ENCODE measurements at regions of chr13 and their contacts with region 1.

Region 1: DNA sequence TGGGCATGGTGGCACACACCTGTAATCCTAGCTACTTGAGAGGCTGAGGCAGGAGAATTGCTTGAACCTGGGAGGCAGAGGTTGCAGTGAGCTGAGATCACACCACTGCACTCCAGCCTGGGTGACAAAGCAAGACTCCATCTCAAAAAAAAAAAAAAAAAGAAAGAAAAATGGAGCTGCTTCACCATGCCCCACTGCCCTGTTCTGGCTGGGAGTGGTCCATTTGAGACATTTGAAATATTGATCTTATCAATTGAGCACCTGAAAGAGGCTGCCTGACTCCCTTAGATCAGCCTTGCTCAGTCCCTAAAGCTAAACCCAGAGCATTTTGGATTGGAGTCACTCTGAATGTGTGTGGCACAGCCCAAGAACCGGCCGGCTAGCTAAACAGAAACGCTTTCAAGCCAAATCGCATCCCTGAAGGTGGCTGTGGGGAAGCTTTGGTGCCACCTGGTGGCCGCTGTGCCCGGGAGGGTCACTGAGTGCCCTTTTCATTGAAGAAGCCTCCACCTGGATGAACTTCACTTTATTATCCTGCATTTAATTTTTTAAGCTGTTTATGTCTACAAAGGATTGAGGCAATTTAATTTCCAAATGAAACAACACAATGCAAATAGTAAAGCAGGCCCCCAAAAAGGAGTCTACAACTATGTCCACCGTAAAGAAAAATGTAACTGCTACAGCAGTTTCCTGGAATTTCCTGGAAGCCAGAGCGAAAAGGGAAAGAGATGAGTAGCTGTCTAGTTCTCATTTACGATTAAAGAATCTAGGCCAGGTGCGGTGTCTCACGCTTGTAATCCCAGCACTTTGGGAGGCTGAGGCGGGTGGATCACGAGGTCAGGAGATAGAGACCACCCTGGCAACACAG is 53.1 kb upstream of the SERPINE3 start:
- DNase-seq: peak; percentile 35 to 50 (median 44)
- H3K4me3 ChIP-seq: no peak overlapping the region
- H3K4me3 Mint-ChIP-seq: peak overlapping the region in 3 of 8 donors; percentile 7 to 39 (median 17)
- H3K27ac ChIP-seq: no peak overlapping the region
- H3K27ac Mint-ChIP-seq: no peak overlapping the region
- H3K4me1 ChIP-seq: no peaks in the 10 kb centered on the region
- H3K4me1 Mint-ChIP-seq: peaks cover 0 to 1% (median 0%) of the 10 kb centered on the region in 4 donors
- H3K27me3 ChIP-seq: no peaks in the 10 kb centered on the region
- H3K27me3 Mint-ChIP-seq: peaks cover 7 to 9% of the 10 kb centered on the region in 2 donors

Region 2: GRCh38 chr13:51093574-51093973 is 192.8 kb before region 1 on chr13:
- CTCF ChIA-PET with region 1: no interaction called
- POLR2A ChIA-PET with region 1: no interaction called
- intact Hi-C with region 1: no loop called
- DNase-seq: no peak
- H3K4me3 ChIP-seq: no peak overlapping the region
- H3K4me3 Mint-ChIP-seq: no peak overlapping the region
- H3K27ac ChIP-seq: no peak overlapping the region
- H3K27ac Mint-ChIP-seq: no peak overlapping the region
- H3K4me1 ChIP-seq: no peaks in the 10 kb centered on the region
- H3K4me1 Mint-ChIP-seq: no peaks in the 10 kb centered on the region
- H3K27me3 ChIP-seq: no peaks in the 10 kb centered on the region
- H3K27me3 Mint-ChIP-seq: peaks cover 0 to 8% of the 10 kb centered on the region in 2 donors

Region 3: DNA sequence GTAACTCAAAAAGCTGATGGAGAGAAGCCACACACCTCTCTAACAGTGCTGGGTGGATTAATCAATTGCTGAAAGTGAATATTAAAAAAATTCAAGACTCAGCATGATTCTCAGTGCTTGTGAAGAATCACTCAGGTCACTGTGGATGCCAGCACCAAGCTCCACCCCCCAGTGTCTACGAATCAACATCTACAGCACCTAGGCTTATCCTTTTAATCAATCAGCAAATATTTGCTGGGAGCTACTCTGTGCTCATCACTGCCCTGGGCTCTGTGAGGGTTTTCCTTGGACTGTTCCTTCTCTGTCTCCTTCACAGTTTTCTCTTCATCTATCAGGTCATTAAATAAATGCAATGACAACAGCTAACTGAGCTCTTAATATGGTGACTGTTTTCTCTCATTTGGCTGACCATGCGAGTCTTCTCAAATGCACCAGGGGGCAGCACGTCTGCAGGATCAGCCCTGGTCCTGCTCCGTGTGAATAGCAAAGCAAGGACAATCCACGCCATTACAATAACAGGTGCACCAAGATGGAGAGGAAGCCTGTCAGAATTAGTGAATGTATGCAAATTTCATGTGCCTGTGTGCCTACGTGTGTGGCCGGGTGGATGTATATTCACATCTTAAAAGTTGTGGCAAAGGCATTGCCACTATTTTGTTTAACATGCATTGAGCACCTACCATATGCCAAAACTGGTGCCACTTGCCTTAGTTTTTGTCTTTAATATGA is 160.7 kb before region 1 on chr13:
- CTCF ChIA-PET with region 1: interaction called, 56 read pairs
- POLR2A ChIA-PET with region 1: no interaction called
- intact Hi-C with region 1: loop called (anchors 1 kb)
- DNase-seq: peak in 4 of 5 donors; percentile 23 to 40 (median 26)
- H3K4me3 ChIP-seq: no peak overlapping the region
- H3K4me3 Mint-ChIP-seq: no peak overlapping the region
- H3K27ac ChIP-seq: no peak overlapping the region
- H3K27ac Mint-ChIP-seq: peak overlapping the region in 1 of 7 donors; percentile 4
- H3K4me1 ChIP-seq: peaks cover 10% of the 10 kb centered on the region
- H3K4me1 Mint-ChIP-seq: peaks cover 8 to 13% (median 12%) of the 10 kb centered on the region in 4 donors
- H3K27me3 ChIP-seq: no peaks in the 10 kb centered on the region
- H3K27me3 Mint-ChIP-seq: peaks cover 6 to 14% of the 10 kb centered on the region in 2 donors

Region 4: DNA sequence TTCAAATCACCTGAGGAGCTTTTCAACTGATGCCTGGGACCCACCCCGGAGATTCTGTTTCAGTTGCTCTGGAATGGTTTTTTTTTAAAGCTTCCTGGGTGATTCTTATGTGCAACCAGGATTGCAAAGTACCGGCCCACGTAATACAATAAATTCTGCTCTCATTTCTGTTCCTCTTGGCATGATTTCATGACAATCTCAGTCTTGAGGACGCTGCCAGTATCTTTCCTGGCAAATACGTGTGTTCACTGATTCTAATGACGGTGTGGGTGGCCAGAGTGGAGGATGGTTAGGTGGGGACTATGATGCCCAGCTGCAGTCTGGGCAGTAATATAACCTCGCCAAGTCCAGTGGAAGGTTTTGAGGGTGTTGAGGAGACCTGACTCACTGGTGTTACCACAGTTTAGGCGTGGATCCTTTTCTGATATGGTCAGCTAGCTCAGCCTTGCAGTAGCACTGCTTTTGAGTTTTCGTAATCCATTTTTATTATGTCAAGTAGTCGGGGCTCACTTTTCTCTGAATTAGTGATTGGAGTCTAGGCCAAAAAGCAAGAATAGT is 14.8 kb before region 1 on chr13:
- CTCF ChIA-PET with region 1: interaction called, 47 read pairs
- POLR2A ChIA-PET with region 1: no interaction called
- intact Hi-C with region 1: no loop called
- DNase-seq: no peak
- H3K4me3 ChIP-seq: no peak overlapping the region
- H3K4me3 Mint-ChIP-seq: no peak overlapping the region
- H3K27ac ChIP-seq: no peak overlapping the region
- H3K27ac Mint-ChIP-seq: peak overlapping the region in 1 of 7 donors; percentile 24
- H3K4me1 ChIP-seq: no peaks in the 10 kb centered on the region
- H3K4me1 Mint-ChIP-seq: no peaks in the 10 kb centered on the region
- H3K27me3 ChIP-seq: no peaks in the 10 kb centered on the region
- H3K27me3 Mint-ChIP-seq: peaks cover 0 to 9% of the 10 kb centered on the region in 2 donors

Region 5: DNA sequence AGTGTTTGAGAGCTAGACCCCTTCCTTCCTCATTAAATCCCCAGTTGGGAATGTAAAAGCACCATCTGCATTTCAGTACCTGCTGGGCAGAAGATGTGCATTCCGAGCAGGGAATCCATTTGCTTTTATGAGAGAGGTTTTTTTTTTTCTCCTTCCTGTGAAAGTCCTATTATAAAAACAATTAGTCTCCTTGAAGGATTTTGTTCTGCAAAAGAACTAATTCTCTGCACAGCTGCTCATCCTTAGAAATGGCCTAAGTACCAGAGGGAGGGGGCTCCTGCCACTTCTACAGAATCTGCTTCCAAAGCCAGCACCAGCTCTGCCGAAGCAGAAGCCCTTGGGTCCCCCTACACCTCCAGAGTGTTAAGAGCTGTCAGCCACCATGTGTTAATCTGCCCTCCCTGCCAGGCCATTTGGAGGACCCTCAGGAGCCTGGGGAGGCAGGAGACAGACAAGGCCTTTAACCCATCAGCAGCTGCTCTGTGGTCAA is 16.7 kb after region 1 on chr13:
- CTCF ChIA-PET with region 1: interaction called, 63 read pairs
- POLR2A ChIA-PET with region 1: no interaction called
- intact Hi-C with region 1: no loop called
- DNase-seq: no peak
- H3K4me3 ChIP-seq: no peak overlapping the region
- H3K4me3 Mint-ChIP-seq: no peak overlapping the region
- H3K27ac ChIP-seq: no peak overlapping the region
- H3K27ac Mint-ChIP-seq: no peak overlapping the region
- H3K4me1 ChIP-seq: no peaks in the 10 kb centered on the region
- H3K4me1 Mint-ChIP-seq: no peaks in the 10 kb centered on the region
- H3K27me3 ChIP-seq: no peaks in the 10 kb centered on the region
- H3K27me3 Mint-ChIP-seq: peaks cover 2 to 16% of the 10 kb centered on the region in 2 donors

Region 6: GRCh38 chr13:51322826-51323225 is 36.5 kb after region 1 on chr13:
- CTCF ChIA-PET with region 1: interaction called, 12 read pairs
- POLR2A ChIA-PET with region 1: no interaction called
- intact Hi-C with region 1: no loop called
- DNase-seq: no peak
- H3K4me3 ChIP-seq: no peak overlapping the region
- H3K4me3 Mint-ChIP-seq: no peak overlapping the region
- H3K27ac ChIP-seq: no peak overlapping the region
- H3K27ac Mint-ChIP-seq: no peak overlapping the region
- H3K4me1 ChIP-seq: no peaks in the 10 kb centered on the region
- H3K4me1 Mint-ChIP-seq: no peaks in the 10 kb centered on the region
- H3K27me3 ChIP-seq: no peaks in the 10 kb centered on the region
- H3K27me3 Mint-ChIP-seq: no peaks in the 10 kb centered on the region

Measured in CD4-positive, alpha-beta memory T cell (primary cell).